ENCODE measurements at regions of chr1 and their contacts with region 1.

Region 1: DNA sequence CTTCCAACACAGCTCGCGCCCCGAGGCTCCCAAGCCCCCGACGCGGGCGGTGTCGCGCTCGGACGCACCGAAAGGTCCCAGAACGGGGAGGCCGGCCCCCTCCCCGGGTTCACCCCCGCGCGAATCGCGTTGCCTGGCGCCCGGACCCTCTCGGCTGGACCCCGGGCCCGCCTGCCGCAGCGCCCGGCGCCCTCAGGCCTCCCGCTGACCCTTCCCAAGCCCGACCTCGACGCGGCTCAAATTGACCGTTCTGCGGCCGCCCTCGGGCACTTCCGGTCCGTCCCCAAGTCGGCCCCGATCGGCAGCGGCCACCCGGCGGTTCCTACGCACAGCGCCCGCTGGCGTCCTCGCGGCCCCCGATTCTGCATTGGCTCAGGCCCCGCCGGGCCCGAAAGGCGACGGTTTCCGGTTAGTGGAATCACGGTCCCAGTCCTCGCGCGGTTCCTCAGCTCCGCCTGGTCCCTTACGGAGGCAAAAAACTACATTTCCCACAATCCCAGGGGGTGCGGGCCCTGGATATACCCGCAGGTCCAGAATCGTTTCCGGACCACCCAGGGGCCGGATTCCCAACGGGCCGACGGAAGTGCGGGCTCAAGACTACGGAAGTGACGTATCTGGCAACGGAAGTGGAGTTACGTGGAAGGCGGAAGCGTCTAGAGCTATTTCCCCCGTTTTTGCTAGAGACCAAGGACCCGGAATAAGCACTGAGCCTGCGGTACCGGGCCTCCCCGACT is at the start of gene AURKAIP1:
- DNase-seq: peak; percentile 96 to 99
- ATAC-seq: peak; percentile 93 to 95
- H3K4me3 ChIP-seq: peak within 1 kb of the TSS; percentile 94
- H3K27ac ChIP-seq: peak within 1 kb of the TSS; percentile 96 to 98
- H3K4me1 ChIP-seq: peaks cover 14% of the 10 kb centered on the region
- CTCF ChIP-seq: no peak
- EP300 ChIP-seq: no peak
- POLR2A ChIP-seq: peak; percentile 45; the same call in 1 of the 2 replicates
- RAD21 ChIP-seq: no peak
- polyA plus RNA-seq, gene AURKAIP1: 49.8 and 62.0 TPM in 2 replicates

Region 2: DNA sequence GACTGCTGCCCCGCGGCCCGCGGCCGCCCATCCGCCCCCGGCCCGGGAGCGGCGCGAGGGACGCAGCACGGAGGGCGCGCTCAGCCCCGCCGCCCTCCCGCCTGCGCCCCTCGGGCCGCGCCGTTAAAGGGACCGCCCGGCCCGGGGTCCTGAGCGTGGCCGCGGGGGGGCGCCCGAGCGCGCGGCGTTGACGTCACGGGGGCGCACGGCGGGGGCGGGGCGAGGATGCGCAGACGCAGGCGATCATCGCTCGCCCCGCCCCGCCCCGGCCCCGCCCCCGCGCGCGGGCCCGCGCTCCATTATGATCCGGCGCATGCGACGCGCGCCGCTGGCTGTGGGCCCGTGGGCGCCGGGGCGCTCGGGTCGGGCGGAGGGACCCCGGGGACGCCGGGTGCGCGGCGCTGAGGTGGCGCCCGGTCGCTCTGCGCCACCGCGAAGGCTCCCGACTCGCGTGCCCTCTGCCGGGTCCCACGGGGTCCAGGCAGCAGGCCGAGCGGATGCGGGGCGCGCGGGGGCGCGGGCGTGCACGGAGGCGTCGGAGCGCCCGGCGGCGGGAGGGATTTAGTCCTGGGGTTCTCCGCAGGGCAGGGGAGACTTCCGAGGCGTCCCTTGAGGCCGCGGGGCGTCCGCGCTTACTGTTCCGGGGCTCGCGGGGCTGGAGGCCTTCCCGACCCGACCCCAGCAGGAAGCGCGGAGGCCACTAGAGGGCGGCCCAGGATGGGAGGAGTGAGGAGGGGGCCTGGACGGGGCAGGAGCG is 25.7 kb before region 1 on chr1 and contains the start of gene DVL1:
- CTCF ChIA-PET with region 1: interaction called, 73 read pairs
- POLR2A ChIA-PET with region 1: interaction called, 3 read pairs
- DNase-seq: peak in 1 of 2 experiments; percentile 47
- ATAC-seq: 0 out of 6 replicates have a peak, but pooled peaks of 1 of the 2 experiments have one; percentile 11
- H3K4me3 ChIP-seq: peak within 1 kb of the TSS; percentile 87
- H3K27ac ChIP-seq: peak within 1 kb of the TSS; percentile 99 to 100
- H3K4me1 ChIP-seq: peaks cover 50% of the 10 kb centered on the region
- CTCF ChIP-seq: peak; percentile 37
- EP300 ChIP-seq: no peak
- POLR2A ChIP-seq: peak; percentile 38; the same call in 1 of the 2 replicates
- RAD21 ChIP-seq: peak; percentile 32 to 34; a peak in 2 of 5 replicates
- polyA plus RNA-seq, gene DVL1: 11.3 and 12.1 TPM in 2 replicates

Region 3: GRCh38 chr1:1358433-1359261 is 16.4 kb before region 1 on chr1 and contains the start of gene MXRA8:
- CTCF ChIA-PET with region 1: interaction called, 35 read pairs
- POLR2A ChIA-PET with region 1: interaction called, 4 read pairs
- DNase-seq: no peak
- ATAC-seq: no peak
- H3K4me3 ChIP-seq: no peak within 1 kb of the TSS
- H3K27ac ChIP-seq: peak within 1 kb of the TSS in 1 of 2 experiments; percentile 30; a peak in 1 of 6 replicates
- H3K4me1 ChIP-seq: peaks cover 31% of the 10 kb centered on the region
- CTCF ChIP-seq: no peak
- EP300 ChIP-seq: no peak
- POLR2A ChIP-seq: no peak
- RAD21 ChIP-seq: no peak
- polyA plus RNA-seq, gene MXRA8: 0.07 and 0.12 TPM in 2 replicates

Region 4: DNA sequence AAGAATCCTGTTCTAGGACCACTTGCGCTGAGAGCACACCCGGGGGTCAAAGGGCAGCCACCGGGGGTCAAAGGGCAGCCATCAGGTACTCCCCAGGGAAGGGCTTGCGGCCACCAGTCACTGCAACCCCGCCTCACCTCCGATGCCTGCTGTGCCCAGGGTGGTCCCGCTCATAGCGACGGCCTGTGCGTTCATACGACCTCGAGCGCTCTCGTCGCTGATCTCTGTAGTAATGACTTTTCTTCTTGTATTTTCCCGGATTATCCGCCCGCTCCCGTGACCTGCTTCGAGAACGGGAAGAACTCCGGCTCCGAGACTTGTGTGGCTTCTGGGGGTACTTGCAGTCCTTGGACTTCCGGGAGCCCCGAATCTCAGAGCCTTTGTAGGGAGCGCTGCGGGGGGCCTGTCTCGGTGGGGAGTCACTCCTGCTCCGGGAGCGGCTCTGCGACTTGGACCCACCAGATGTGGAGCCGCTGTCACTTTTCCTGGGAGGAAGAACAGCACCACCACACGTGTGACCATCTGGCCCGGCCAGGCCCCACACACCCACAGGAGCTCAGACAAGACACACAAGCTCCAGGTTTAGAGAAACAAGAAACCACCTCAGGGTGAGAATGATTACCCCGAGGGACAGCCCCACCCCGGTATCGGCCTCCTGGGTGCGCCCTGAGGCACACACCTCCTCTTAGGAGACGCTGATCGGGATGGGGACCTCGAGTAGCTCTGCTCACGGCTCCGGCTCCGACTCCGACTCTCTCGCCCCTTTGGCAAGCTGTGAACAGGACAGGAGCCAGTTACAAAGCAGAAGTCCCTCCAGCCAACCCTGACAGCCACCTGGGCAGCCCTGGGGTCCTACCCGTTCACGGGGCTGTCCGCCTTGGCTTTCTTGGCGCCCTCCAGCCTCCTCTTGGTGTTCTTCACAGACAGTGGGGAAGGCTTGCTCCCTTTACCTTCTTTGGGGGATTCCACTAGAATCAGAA is 12.3 kb after region 1 on chr1:
- CTCF ChIA-PET with region 1: interaction called, 17 read pairs
- POLR2A ChIA-PET with region 1: interaction called, 4 read pairs
- DNase-seq: no peak
- ATAC-seq: no peak
- H3K4me3 ChIP-seq: no peak overlapping the region
- H3K27ac ChIP-seq: no peak overlapping the region
- H3K4me1 ChIP-seq: no peaks in the 10 kb centered on the region
- CTCF ChIP-seq: no peak
- EP300 ChIP-seq: no peak
- POLR2A ChIP-seq: no peak
- RAD21 ChIP-seq: no peak

Region 5: GRCh38 chr1:1399187-1399871 is 24.2 kb after region 1 on chr1 and contains the start of gene CCNL2:
- CTCF ChIA-PET with region 1: interaction called, 6 read pairs
- POLR2A ChIA-PET with region 1: interaction called, 20 read pairs
- DNase-seq: peak; percentile 83 to 97
- ATAC-seq: peak; percentile 95 to 96
- H3K4me3 ChIP-seq: peak within 1 kb of the TSS; percentile 96
- H3K27ac ChIP-seq: peak within 1 kb of the TSS; percentile 93 to 99
- H3K4me1 ChIP-seq: peaks cover 29% of the 10 kb centered on the region
- CTCF ChIP-seq: 0 out of 3 replicates have a peak, but pooled peaks have one; percentile 7
- EP300 ChIP-seq: no peak
- POLR2A ChIP-seq: peak; percentile 60
- RAD21 ChIP-seq: no peak
- polyA plus RNA-seq, gene CCNL2: 111 TPM in 2 replicates

Region 6: GRCh38 chr1:1406817-1407635 is 31.9 kb after region 1 on chr1 and contains the start of gene MRPL20:
- CTCF ChIA-PET with region 1: interaction called, 4 read pairs
- POLR2A ChIA-PET with region 1: interaction called, 12 read pairs
- DNase-seq: peak; percentile 86 to 87
- ATAC-seq: peak; percentile 97
- H3K4me3 ChIP-seq: peak within 1 kb of the TSS; percentile 69
- H3K27ac ChIP-seq: peak within 1 kb of the TSS; percentile 88 to 100
- H3K4me1 ChIP-seq: peaks cover 26% of the 10 kb centered on the region
- CTCF ChIP-seq: no peak
- EP300 ChIP-seq: no peak
- POLR2A ChIP-seq: peak; percentile 76
- RAD21 ChIP-seq: no peak
- polyA plus RNA-seq, gene MRPL20: 146 and 163 TPM in 2 replicates

Measured in A549 (cell line).